Tibial artery (tissue), 4 donors: ENCODE measurements at regions of chr11 and their contacts with region 1.

Region 1: GRCh38 chr11:25981998-25982397 is 349.9 kb upstream of the ANO3 start:
- DNase-seq: no peak
- H3K4me3 ChIP-seq: no peak overlapping the region
- H3K27ac ChIP-seq: no peak overlapping the region
- H3K4me1 ChIP-seq: no peaks in the 10 kb centered on the region
- H3K27me3 ChIP-seq: no peaks in the 10 kb centered on the region
- CTCF ChIP-seq: peak; percentile 57 to 67

Region 2: DNA sequence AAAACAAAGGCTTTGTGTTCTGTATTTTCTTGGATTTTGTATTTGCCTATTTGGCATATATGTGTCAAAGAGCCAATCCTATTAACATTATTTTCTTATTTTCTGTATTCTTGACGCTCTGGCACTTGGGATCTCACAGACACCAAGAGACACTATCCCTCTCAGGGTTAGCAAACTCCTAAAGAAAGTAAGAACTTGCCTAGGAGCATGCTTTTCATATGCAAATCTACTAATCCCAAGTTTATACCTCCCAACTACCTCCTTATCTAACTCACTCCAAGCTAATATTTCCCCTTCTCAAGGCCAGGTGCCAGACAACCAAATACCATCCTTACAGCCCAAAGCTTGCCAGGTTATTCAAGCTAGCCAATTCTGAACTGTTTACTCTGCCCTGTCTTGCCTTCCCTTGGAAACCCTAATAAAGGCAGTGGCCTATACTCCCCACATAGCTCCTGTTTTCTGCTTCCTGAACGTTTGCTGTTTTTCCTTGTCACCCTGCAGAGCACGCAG is 105.5 kb before region 1 on chr11:
- intact Hi-C with region 1: no loop called
- DNase-seq: no peak
- H3K4me3 ChIP-seq: no peak overlapping the region
- H3K27ac ChIP-seq: no peak overlapping the region
- H3K4me1 ChIP-seq: no peaks in the 10 kb centered on the region
- H3K27me3 ChIP-seq: no peaks in the 10 kb centered on the region
- CTCF ChIP-seq: no peak

Region 3: DNA sequence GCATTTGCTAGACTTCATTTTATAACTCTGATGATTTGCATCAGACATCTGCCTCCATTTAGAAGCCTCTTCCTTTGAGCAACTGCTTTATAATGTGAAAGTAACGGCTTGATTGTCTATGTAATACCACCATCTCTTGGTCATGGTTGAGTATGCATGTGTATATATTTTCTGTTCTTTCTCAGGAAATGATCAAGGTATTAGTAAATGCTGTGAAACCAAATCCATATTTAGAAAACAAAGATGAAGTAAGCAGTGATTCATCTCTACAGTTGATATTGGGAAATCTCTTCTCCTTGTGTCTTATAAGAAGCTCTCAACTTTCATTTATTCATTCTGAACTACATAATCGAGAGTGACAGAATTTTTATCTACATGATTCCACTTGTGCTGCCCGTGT is 245.3 kb after region 1 on chr11:
- intact Hi-C with region 1: loop called (anchors 5 kb)
- DNase-seq: no peak
- H3K4me3 ChIP-seq: peak overlapping the region in 1 of 2 donors; percentile 1
- H3K27ac ChIP-seq: peak overlapping the region; percentile 26 to 35
- H3K4me1 ChIP-seq: peaks cover 0 to 19% (median 2%) of the 10 kb centered on the region in 4 donors
- H3K27me3 ChIP-seq: no peaks in the 10 kb centered on the region
- CTCF ChIP-seq: peak; percentile 52 to 64

Region 4: GRCh38 chr11:26276798-26277424 is 294.9 kb after region 1 on chr11:
- intact Hi-C with region 1: loop called (anchors 5 kb)
- DNase-seq: peak in 1 of 2 donors; percentile 34
- H3K4me3 ChIP-seq: no peak overlapping the region
- H3K27ac ChIP-seq: no peak overlapping the region
- H3K4me1 ChIP-seq: peaks cover 0 to 6% (median 0%) of the 10 kb centered on the region in 4 donors
- H3K27me3 ChIP-seq: no peaks in the 10 kb centered on the region
- CTCF ChIP-seq: peak; percentile 86 to 91